OCI-LY7 (cell line): ENCODE measurements at regions of chr2 and their contacts with region 1.

Region 1: DNA sequence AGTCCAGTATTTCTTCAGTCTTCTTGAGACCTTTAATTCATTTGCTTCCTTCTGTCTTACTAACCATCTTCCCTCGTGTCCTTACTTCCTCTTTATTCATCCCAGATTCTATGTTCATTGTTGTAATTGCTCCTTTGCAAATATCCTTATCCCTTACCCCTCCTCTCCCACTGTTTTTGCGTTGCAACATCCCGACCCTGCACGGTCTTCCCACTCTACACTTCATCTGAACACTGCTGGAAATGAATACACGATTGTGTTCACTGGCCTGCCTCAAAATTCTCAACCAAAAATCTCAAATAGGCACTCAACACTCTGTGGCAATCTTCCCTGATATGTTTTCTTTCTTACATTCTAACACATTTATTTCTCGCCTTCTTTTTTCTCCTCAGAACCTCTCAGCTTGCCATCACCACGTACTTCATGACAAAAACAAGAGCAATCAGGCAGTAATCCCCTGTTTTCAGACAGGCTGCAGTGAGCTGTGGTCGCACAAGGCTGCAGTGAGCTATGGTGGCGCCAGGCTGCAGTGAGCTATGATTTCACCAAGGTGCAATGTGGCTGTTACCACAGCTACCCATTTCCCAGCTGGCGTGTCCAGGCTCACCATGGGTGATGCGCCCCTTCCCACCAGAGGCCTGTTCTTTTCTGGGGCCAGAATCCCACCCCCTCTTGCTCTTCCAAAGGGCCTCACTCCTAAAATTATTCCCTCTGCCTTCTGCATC is 25.7 kb downstream of the TCF23 start:
- DNase-seq: peak; percentile 53
- H3K4me3 ChIP-seq: no peak overlapping the region
- H3K27ac ChIP-seq: peak overlapping the region; percentile 18
- H3K4me1 ChIP-seq: peaks cover 86% of the 10 kb centered on the region
- CTCF ChIP-seq: peak; percentile 41; the same call in 1 of the 2 replicates

Region 2: GRCh38 chr2:27185331-27186026 is 11.0 kb after region 1 on chr2:
- CTCF ChIA-PET with region 1: interaction called, 4 read pairs
- POLR2A ChIA-PET with region 1: interaction called, 24 read pairs
- intact Hi-C with region 1: no loop called
- DNase-seq: peak; percentile 67
- H3K4me3 ChIP-seq: no peak overlapping the region
- H3K27ac ChIP-seq: peak overlapping the region; percentile 6
- H3K4me1 ChIP-seq: peaks cover 25% of the 10 kb centered on the region
- CTCF ChIP-seq: no peak

Region 3: GRCh38 chr2:27191053-27191829 is 16.8 kb after region 1 on chr2:
- CTCF ChIA-PET with region 1: interaction called, 4 read pairs
- POLR2A ChIA-PET with region 1: interaction called, 24 read pairs
- intact Hi-C with region 1: loop called (anchors 1 kb)
- DNase-seq: peak; percentile 89
- H3K4me3 ChIP-seq: no peak overlapping the region
- H3K27ac ChIP-seq: peak overlapping the region; percentile 32
- H3K4me1 ChIP-seq: peaks cover 56% of the 10 kb centered on the region
- CTCF ChIP-seq: peak; percentile 97